B cell (primary cell): ENCODE measurements at regions of chr14 and their contacts with region 1.

Region 1: GRCh38 chr14:64478634-64479250 is 13.4 kb downstream of the AKAP5 start:
- DNase-seq: peak; percentile 63
- ATAC-seq: no peak
- H3K4me3 ChIP-seq: no peak overlapping the region
- H3K4me3 Mint-ChIP-seq: no peak overlapping the region
- H3K27ac ChIP-seq: no peak overlapping the region
- H3K27ac Mint-ChIP-seq: no peak overlapping the region
- H3K4me1 ChIP-seq: no peaks in the 10 kb centered on the region
- H3K4me1 Mint-ChIP-seq: peaks cover 3% of the 10 kb centered on the region
- H3K27me3 ChIP-seq: no peaks in the 10 kb centered on the region
- H3K27me3 Mint-ChIP-seq: no peaks in the 10 kb centered on the region
- CTCF ChIP-seq: peak; percentile 85

Region 2: DNA sequence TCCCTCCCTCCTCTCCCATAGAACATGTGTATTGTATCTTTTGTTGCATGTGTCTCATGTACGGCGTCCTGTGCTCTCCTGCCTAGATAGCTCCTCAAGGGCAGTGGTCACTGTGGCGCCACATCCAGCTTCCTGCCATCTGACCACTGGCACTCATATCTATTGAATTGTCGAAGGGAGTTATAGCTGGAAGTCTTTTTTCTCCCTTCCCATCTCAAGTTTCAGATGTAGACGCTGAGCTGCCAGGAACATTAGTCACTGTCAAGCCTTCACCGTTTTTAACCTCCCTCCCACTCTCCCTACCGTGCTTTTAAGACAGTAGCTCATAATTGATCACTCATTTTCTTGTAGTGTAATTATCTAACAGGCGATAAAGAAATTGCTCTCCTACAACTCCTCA is 57.6 kb before region 1 on chr14:
- CTCF ChIA-PET with region 1: interaction called, 255 read pairs
- POLR2A ChIA-PET with region 1: no interaction called
- intact Hi-C with region 1: no loop called
- DNase-seq: no peak
- ATAC-seq: no peak
- H3K4me3 ChIP-seq: no peak overlapping the region
- H3K4me3 Mint-ChIP-seq: no peak overlapping the region
- H3K27ac ChIP-seq: no peak overlapping the region
- H3K27ac Mint-ChIP-seq: no peak overlapping the region
- H3K4me1 ChIP-seq: no peaks in the 10 kb centered on the region
- H3K4me1 Mint-ChIP-seq: no peaks in the 10 kb centered on the region
- H3K27me3 ChIP-seq: no peaks in the 10 kb centered on the region
- H3K27me3 Mint-ChIP-seq: no peaks in the 10 kb centered on the region
- CTCF ChIP-seq: no peak

Region 3: GRCh38 chr14:64465191-64465822 is 13.4 kb before region 1 on chr14 and contains the start of gene AKAP5:
- CTCF ChIA-PET with region 1: interaction called, 17 read pairs
- POLR2A ChIA-PET with region 1: no interaction called
- intact Hi-C with region 1: no loop called
- DNase-seq: peak; percentile 81
- ATAC-seq: peak; percentile 84
- H3K4me3 ChIP-seq: peak within 1 kb of the TSS; percentile 53 to 80 (median 68)
- H3K4me3 Mint-ChIP-seq: peak within 1 kb of the TSS; percentile 88
- H3K27ac ChIP-seq: peak within 1 kb of the TSS; percentile 36 to 61
- H3K27ac Mint-ChIP-seq: peak within 1 kb of the TSS; percentile 82
- H3K4me1 ChIP-seq: peaks cover 36 to 38% of the 10 kb centered on the region in 2 donors
- H3K4me1 Mint-ChIP-seq: peaks cover 57% of the 10 kb centered on the region
- H3K27me3 ChIP-seq: no peaks in the 10 kb centered on the region
- H3K27me3 Mint-ChIP-seq: no peaks in the 10 kb centered on the region
- CTCF ChIP-seq: no peak
- total RNA-seq, gene AKAP5: 1.4 and 1.7 TPM in 2 replicates

Region 4: GRCh38 chr14:64496764-64497163 is 18.0 kb after region 1 on chr14:
- CTCF ChIA-PET with region 1: interaction called, 17 read pairs
- POLR2A ChIA-PET with region 1: no interaction called
- intact Hi-C with region 1: no loop called
- DNase-seq: no peak
- ATAC-seq: no peak
- H3K4me3 ChIP-seq: no peak overlapping the region
- H3K4me3 Mint-ChIP-seq: no peak overlapping the region
- H3K27ac ChIP-seq: no peak overlapping the region
- H3K27ac Mint-ChIP-seq: no peak overlapping the region
- H3K4me1 ChIP-seq: peaks cover 22 to 23% of the 10 kb centered on the region in 2 donors
- H3K4me1 Mint-ChIP-seq: peaks cover 39% of the 10 kb centered on the region
- H3K27me3 ChIP-seq: no peaks in the 10 kb centered on the region
- H3K27me3 Mint-ChIP-seq: no peaks in the 10 kb centered on the region
- CTCF ChIP-seq: no peak